Activated T-helper 1 cell treated with anti-CD3 and anti-CD28 coated beads, Interleukin-12 subunit alpha, Interleukin-12 subunit beta, Interleukin-2, Interleukin-4 antibody, amounts not matched to agents 30 ng/mL and 10 ng/mL and 1 ng/mL, durations not matched to agents 14 hours and 24 hours and 36 hours (primary cell): ENCODE measurements at regions of chrX and their contacts with region 1.

Region 1: GRCh38 chrX:40933132-40933705 is 152.0 kb upstream of the USP9X start:
- DNase-seq: peak; percentile 2
- H3K4me3 Mint-ChIP-seq: peak overlapping the region; percentile 67
- H3K27ac Mint-ChIP-seq: peak overlapping the region; percentile 95
- H3K4me1 Mint-ChIP-seq: peaks cover 15% of the 10 kb centered on the region
- H3K27me3 Mint-ChIP-seq: peaks cover 1% of the 10 kb centered on the region

Region 2: DNA sequence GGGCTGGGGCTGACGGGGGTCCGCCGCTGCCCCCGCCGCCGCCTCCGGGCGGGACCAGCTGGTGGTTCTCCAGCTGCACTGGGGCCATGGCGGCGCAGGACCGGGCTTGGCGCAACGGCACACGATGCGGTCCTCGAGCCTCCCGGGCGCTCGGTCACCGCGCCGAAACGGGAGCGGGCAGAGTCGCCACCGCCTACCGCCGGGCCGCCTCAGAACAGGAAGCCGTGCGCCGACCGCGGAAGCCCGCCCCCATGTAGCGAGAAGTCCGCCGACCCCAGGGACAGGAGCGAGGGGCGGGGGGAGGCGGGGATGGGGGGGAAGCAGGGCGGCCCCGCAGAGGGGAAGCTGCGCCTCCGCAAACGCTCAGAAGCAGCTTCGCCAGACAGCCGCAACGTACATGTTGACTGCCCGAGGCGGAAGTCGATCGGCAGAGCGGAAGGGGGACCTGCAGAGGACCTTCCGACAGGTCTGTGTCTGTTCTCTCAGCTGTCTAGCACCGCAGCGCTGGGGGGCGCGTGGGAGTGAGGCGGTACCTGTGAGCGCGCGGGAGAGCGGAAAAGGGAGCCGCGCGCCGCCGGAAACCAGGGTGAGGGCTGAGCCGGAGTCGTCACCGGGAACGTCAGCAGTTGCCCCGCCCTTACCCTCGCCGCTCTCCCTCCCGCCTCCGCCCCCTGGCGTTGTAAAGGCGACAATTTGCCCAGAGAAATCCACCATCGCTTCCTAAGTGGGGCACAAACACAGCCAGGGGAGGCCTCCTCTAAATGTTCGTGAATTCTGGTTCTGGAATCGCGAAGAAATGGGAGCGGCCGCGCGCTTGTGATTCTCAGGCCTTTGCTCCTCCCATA is 197.7 kb before region 1 on chrX and contains the start of gene MED14:
- intact Hi-C with region 1: loop called (anchors 1 kb)
- DNase-seq: peak; percentile 82
- H3K4me3 Mint-ChIP-seq: peak within 1 kb of the TSS; percentile 87
- H3K27ac Mint-ChIP-seq: peak within 1 kb of the TSS; percentile 90
- H3K4me1 Mint-ChIP-seq: peaks cover 30% of the 10 kb centered on the region
- H3K27me3 Mint-ChIP-seq: no peaks in the 10 kb centered on the region
- total RNA-seq, gene MED14: 36.4 and 40.9 TPM in 2 replicates

Region 3: GRCh38 chrX:40952855-40953254 is 19.6 kb after region 1 on chrX:
- intact Hi-C with region 1: loop called (anchors 1 kb)
- DNase-seq: peak; percentile 2
- H3K4me3 Mint-ChIP-seq: peak overlapping the region; percentile 58
- H3K27ac Mint-ChIP-seq: no peak overlapping the region
- H3K4me1 Mint-ChIP-seq: peaks cover 10% of the 10 kb centered on the region
- H3K27me3 Mint-ChIP-seq: no peaks in the 10 kb centered on the region

Region 4: DNA sequence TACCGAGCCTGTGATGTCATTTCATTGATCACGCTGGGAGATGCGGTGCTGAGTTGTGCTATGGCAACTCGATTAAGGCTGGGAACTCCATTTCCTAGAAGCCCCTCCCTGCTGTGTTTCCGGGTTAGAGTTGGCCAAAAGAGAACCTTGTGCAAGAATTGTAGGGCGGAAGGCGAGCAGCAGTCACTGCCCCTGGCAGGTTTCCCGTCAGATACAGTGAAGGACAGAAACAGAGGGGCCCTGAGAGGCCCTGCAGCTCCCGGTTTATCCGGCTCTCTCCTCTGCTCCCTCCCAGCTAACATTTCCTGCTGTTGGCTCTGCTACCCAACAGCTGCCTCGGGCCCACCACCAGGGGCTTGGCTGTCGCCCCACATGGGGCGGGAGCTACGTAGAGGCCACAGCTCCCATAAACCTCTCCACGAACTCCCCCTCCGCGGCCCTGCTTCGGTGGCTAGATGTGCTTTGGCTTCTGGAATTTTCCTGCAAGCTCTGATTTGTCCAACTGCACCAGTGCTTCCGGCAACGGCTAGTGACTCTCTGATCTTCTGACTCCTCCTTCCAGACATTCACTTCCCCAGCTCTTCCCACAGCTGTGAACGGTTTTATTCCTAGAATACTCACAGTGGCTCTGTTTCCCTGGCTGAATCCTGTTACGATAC is 77.1 kb after region 1 on chrX:
- intact Hi-C with region 1: loop called (anchors 5 kb)
- DNase-seq: peak; percentile 53
- H3K4me3 Mint-ChIP-seq: peak overlapping the region; percentile 76
- H3K27ac Mint-ChIP-seq: peak overlapping the region; percentile 86
- H3K4me1 Mint-ChIP-seq: peaks cover 24% of the 10 kb centered on the region
- H3K27me3 Mint-ChIP-seq: no peaks in the 10 kb centered on the region